ENCODE measurements at regions of chr16 and their contacts with region 1.

Region 1: GRCh38 chr16:89363621-89364393 is 126.6 kb downstream of the ANKRD11 start:
- DNase-seq: peak; percentile 64
- ATAC-seq: peak; percentile 20
- H3K4me3 Mint-ChIP-seq: peak overlapping the region; percentile 27
- H3K27ac Mint-ChIP-seq: peak overlapping the region; percentile 85
- H3K4me1 Mint-ChIP-seq: peaks cover 94% of the 10 kb centered on the region
- H3K27me3 Mint-ChIP-seq: no peaks in the 10 kb centered on the region

Region 2: GRCh38 chr16:89071686-89072547 is 291.9 kb before region 1 on chr16:
- CTCF ChIA-PET with region 1: no interaction called
- POLR2A ChIA-PET with region 1: no interaction called
- intact Hi-C with region 1: no loop called
- DNase-seq: no peak
- ATAC-seq: no peak
- H3K4me3 Mint-ChIP-seq: no peak overlapping the region
- H3K27ac Mint-ChIP-seq: no peak overlapping the region
- H3K4me1 Mint-ChIP-seq: no peaks in the 10 kb centered on the region
- H3K27me3 Mint-ChIP-seq: no peaks in the 10 kb centered on the region

Region 3: GRCh38 chr16:89122322-89122851 is 241.4 kb before region 1 on chr16:
- CTCF ChIA-PET with region 1: no interaction called
- POLR2A ChIA-PET with region 1: no interaction called
- intact Hi-C with region 1: no loop called
- DNase-seq: peak; percentile 75
- ATAC-seq: peak; percentile 74
- H3K4me3 Mint-ChIP-seq: no peak overlapping the region
- H3K27ac Mint-ChIP-seq: peak overlapping the region; percentile 72
- H3K4me1 Mint-ChIP-seq: peaks cover 45% of the 10 kb centered on the region
- H3K27me3 Mint-ChIP-seq: no peaks in the 10 kb centered on the region

Region 4: GRCh38 chr16:89319883-89320781 is 43.7 kb before region 1 on chr16:
- CTCF ChIA-PET with region 1: no interaction called
- POLR2A ChIA-PET with region 1: no interaction called
- intact Hi-C with region 1: loop called (anchors 1 to 5 kb)
- DNase-seq: peak; percentile 75
- ATAC-seq: peak; percentile 34
- H3K4me3 Mint-ChIP-seq: no peak overlapping the region
- H3K27ac Mint-ChIP-seq: peak overlapping the region; percentile 75
- H3K4me1 Mint-ChIP-seq: peaks cover 95% of the 10 kb centered on the region
- H3K27me3 Mint-ChIP-seq: no peaks in the 10 kb centered on the region

Region 5: DNA sequence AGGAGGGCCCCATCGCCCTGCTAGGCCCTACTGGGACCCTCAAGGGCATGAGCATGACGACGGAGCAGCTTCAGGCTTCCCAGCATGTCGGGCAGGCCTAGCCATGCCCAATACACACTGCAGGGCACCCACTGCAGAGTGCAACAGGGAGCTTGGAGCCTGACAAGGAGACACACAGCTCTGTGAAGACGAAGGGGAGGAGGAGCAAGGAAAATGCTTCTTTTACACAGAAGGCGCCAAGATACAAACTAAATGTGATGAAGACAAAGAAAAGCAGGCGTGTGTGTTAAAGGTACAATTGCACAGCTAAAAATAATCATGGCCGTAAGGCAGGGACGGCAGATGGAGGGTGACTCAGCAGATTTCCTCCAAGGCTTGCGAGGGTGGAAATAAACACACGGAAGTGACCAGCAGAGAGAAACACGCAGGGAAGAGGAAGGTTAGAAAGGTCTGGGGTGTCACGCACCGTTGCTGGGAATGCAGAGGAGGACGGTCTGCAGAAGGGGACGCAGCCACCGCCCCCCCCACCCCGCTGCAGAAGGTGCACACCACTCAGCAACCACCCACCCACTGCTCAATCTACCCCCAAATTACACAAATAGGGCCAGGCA is 37.8 kb before region 1 on chr16:
- CTCF ChIA-PET with region 1: no interaction called
- POLR2A ChIA-PET with region 1: no interaction called
- intact Hi-C with region 1: loop called (anchors 1 to 5 kb)
- DNase-seq: no peak
- ATAC-seq: no peak
- H3K4me3 Mint-ChIP-seq: no peak overlapping the region
- H3K27ac Mint-ChIP-seq: peak overlapping the region; percentile 77
- H3K4me1 Mint-ChIP-seq: peaks cover 87% of the 10 kb centered on the region
- H3K27me3 Mint-ChIP-seq: no peaks in the 10 kb centered on the region

Region 6: DNA sequence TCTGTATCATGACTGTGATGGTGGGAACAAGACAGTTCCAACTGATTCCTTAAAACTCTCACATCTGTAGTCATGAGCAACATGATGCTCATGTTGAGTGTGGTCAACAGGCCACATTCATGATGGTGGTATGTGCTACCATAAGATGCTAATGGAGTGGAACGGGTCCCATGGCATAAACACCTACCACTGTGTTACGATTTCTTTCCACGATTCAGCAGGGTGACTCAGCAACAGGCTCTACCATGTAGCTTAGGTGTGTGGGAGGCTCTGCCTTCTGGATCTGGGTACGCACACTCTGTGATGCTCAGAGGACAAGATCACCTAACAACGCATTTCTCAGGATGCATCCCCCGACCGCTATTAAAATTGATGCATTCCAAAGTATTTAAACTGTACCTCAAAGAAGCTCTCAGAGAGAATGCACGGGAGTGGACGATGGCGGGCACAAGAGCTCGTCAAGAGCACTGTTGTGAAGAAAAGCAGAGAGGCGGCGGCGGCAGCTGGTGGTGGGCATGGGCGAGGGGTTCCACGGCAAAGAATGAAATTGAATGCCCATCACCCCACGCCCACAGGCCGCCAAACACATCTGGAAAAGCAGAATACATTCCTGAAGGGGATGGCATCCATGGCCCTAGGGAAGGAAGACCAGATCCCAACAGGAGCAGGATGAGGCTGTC is 13.0 kb before region 1 on chr16:
- CTCF ChIA-PET with region 1: interaction called, 5 read pairs
- POLR2A ChIA-PET with region 1: interaction called, 5 read pairs
- intact Hi-C with region 1: loop called (anchors 1 kb)
- DNase-seq: peak; percentile 78
- ATAC-seq: peak; percentile 81
- H3K4me3 Mint-ChIP-seq: no peak overlapping the region
- H3K27ac Mint-ChIP-seq: peak overlapping the region; percentile 74
- H3K4me1 Mint-ChIP-seq: peaks cover 94% of the 10 kb centered on the region
- H3K27me3 Mint-ChIP-seq: no peaks in the 10 kb centered on the region

Region 7: GRCh38 chr16:89383082-89384003 is 19.5 kb after region 1 on chr16:
- CTCF ChIA-PET with region 1: interaction called, 5 read pairs
- POLR2A ChIA-PET with region 1: no interaction called
- intact Hi-C with region 1: loop called in 1 of 2 experiments (anchors 2 kb)
- DNase-seq: peak; percentile 61
- ATAC-seq: peak; percentile 80
- H3K4me3 Mint-ChIP-seq: peak overlapping the region; percentile 3
- H3K27ac Mint-ChIP-seq: peak overlapping the region; percentile 56
- H3K4me1 Mint-ChIP-seq: peaks cover 90% of the 10 kb centered on the region
- H3K27me3 Mint-ChIP-seq: no peaks in the 10 kb centered on the region

Region 8: GRCh38 chr16:89410794-89411309 is 47.0 kb after region 1 on chr16:
- CTCF ChIA-PET with region 1: interaction called, 5 read pairs
- POLR2A ChIA-PET with region 1: no interaction called
- intact Hi-C with region 1: loop called in 1 of 2 experiments (anchors 5 kb)
- DNase-seq: peak; percentile 38
- ATAC-seq: peak; percentile 1
- H3K4me3 Mint-ChIP-seq: no peak overlapping the region
- H3K27ac Mint-ChIP-seq: peak overlapping the region; percentile 68
- H3K4me1 Mint-ChIP-seq: peaks cover 83% of the 10 kb centered on the region
- H3K27me3 Mint-ChIP-seq: no peaks in the 10 kb centered on the region

Measured in activated CD4-positive, alpha-beta T cell treated with anti-CD3 and anti-CD28 coated beads for 36 hours (primary cell).